Activated CD4-positive, alpha-beta T cell treated with anti-CD3 and anti-CD28 coated beads for 36 hours (primary cell): ENCODE measurements at regions of chr11 and their contacts with region 1.

Region 1: DNA sequence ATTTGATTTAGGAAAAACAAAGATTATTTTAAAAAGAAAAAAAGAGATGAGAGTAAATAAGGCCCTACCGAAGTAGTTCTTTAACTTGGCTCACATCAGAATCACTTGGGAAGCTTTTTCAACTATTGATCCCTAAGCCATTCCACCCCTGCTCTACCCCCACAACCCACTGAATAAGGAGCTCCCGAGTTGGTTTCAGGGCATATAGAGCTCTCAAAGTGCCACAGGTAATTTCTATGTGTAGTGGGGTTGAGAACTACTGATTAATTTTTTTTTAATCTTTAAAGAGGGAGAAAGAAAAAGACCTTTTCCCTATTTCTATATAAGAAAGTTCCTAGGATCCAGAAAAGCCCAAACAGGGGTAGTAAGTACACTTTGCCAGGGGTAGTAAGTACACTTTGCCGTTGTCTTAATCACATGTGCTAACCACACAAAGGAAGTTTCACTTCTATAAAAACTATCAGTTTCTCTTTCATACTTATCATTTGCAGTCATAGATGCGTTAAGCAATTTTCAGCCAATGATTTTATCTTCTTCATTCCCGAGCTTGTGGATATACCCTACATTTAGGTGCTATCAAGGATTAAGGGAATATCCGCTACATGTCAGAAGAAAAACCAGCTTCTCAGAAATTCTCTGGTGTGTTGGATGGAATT is 108.4 kb upstream of the ZC3H12C start:
- DNase-seq: no peak
- ATAC-seq: peak; percentile 88
- H3K4me3 Mint-ChIP-seq: no peak overlapping the region
- H3K27ac Mint-ChIP-seq: no peak overlapping the region
- H3K4me1 Mint-ChIP-seq: peaks cover 16% of the 10 kb centered on the region
- H3K27me3 Mint-ChIP-seq: peaks cover 5% of the 10 kb centered on the region

Region 2: DNA sequence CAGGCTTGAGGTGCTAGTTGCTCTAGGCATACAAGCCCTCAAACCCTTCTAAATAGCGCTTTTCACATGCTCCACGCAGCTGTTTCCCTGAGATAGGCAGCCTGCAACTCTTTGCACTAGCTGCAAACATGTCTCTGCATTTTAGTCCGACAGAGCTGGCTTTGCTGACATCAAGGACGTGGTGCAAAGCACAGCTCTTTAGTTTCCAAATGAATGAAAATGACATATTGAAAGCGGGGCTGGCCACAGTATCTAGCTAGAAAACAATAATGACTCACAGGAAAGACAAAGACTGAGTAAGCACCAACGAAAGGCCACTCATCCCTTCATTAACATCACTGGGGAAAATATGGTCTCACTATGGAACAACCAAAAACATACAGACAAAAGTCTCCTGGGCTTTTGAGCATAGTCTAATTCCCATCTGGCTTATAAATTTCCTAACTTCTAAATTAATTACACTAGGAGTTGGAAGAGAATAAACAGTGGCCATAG is 93.1 kb after region 1 on chr11:
- CTCF ChIA-PET with region 1: no interaction called
- POLR2A ChIA-PET with region 1: no interaction called
- intact Hi-C with region 1: loop called in 1 of 2 experiments (anchors 5 kb)
- DNase-seq: peak; percentile 67
- ATAC-seq: peak; percentile 93
- H3K4me3 Mint-ChIP-seq: no peak overlapping the region
- H3K27ac Mint-ChIP-seq: peak overlapping the region; percentile 61
- H3K4me1 Mint-ChIP-seq: peaks cover 17% of the 10 kb centered on the region
- H3K27me3 Mint-ChIP-seq: peaks cover 13% of the 10 kb centered on the region

Region 3: GRCh38 chr11:110092515-110093404 is 108.0 kb after region 1 on chr11 and contains the start of gene ZC3H12C:
- CTCF ChIA-PET with region 1: no interaction called
- POLR2A ChIA-PET with region 1: no interaction called
- intact Hi-C with region 1: loop called in 1 of 2 experiments (anchors 5 kb)
- DNase-seq: peak; percentile 74
- ATAC-seq: peak; percentile 73
- H3K4me3 Mint-ChIP-seq: peak within 1 kb of the TSS; percentile 74
- H3K27ac Mint-ChIP-seq: peak within 1 kb of the TSS; percentile 52
- H3K4me1 Mint-ChIP-seq: peaks cover 10% of the 10 kb centered on the region
- H3K27me3 Mint-ChIP-seq: peaks cover 49% of the 10 kb centered on the region
- total RNA-seq, gene ZC3H12C: 1.6 TPM